Activated CD4-positive, alpha-beta T cell treated with anti-CD3 and anti-CD28 coated beads for 36 hours (primary cell): ENCODE measurements at regions of chr15 and their contacts with region 1.

Region 1: GRCh38 chr15:55327387-55327786 is 8.4 kb downstream of the PIGB start:
- DNase-seq: no peak
- ATAC-seq: no peak
- H3K4me3 Mint-ChIP-seq: no peak overlapping the region
- H3K27ac Mint-ChIP-seq: no peak overlapping the region
- H3K4me1 Mint-ChIP-seq: peaks cover 6% of the 10 kb centered on the region
- H3K27me3 Mint-ChIP-seq: no peaks in the 10 kb centered on the region

Region 2: GRCh38 chr15:55297315-55297714 is 30.1 kb before region 1 on chr15:
- CTCF ChIA-PET with region 1: no interaction called
- POLR2A ChIA-PET with region 1: interaction called, 10 read pairs
- intact Hi-C with region 1: no loop called
- DNase-seq: no peak
- ATAC-seq: no peak
- H3K4me3 Mint-ChIP-seq: no peak overlapping the region
- H3K27ac Mint-ChIP-seq: no peak overlapping the region
- H3K4me1 Mint-ChIP-seq: no peaks in the 10 kb centered on the region
- H3K27me3 Mint-ChIP-seq: no peaks in the 10 kb centered on the region